Caco-2 (cell line): ENCODE measurements at regions of chr4 and their contacts with region 1.

Region 1: DNA sequence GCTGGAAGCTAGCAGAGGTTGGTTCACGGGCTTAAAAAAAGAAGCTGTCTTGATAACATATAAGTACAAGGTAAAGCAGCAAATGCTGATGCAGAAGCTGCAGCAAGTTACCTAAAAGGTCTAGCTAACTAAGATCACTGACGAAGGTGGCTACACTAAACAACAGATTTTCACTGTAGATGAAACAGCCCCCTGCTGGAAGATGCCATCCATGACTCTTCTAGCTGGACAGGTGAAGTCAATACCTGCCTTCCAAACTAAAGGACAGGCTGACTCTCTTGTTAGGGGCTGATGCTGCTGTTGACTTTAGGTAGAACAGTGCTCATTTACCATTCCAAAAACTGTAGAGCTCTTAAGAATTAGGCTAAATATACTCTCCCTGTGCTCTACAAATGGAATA is 99.5 kb downstream of the FBXW7 start:
- DNase-seq: peak; percentile 37 to 43
- H3K4me3 ChIP-seq: no peak overlapping the region
- H3K4me3 Mint-ChIP-seq: no peak overlapping the region
- H3K27ac Mint-ChIP-seq: no peak overlapping the region
- H3K4me1 ChIP-seq: peaks cover 13% of the 10 kb centered on the region
- H3K4me1 Mint-ChIP-seq: peaks cover 8% of the 10 kb centered on the region
- H3K27me3 ChIP-seq: no peaks in the 10 kb centered on the region
- H3K27me3 Mint-ChIP-seq: no peaks in the 10 kb centered on the region
- CTCF ChIP-seq: peak; percentile 12 to 35

Region 2: GRCh38 chr4:152408514-152409327 is 27.7 kb before region 1 on chr4:
- CTCF ChIA-PET with region 1: interaction called, 4 read pairs
- POLR2A ChIA-PET with region 1: no interaction called
- intact Hi-C with region 1: loop called (anchors 1 kb)
- DNase-seq: peak in 1 of 2 experiments; percentile 56
- H3K4me3 ChIP-seq: no peak overlapping the region
- H3K4me3 Mint-ChIP-seq: no peak overlapping the region
- H3K27ac Mint-ChIP-seq: no peak overlapping the region
- H3K4me1 ChIP-seq: 0 out of 2 replicates have a peak, but pooled peaks cover 1% of the 10 kb centered on the region
- H3K4me1 Mint-ChIP-seq: no peaks in the 10 kb centered on the region
- H3K27me3 ChIP-seq: no peaks in the 10 kb centered on the region
- H3K27me3 Mint-ChIP-seq: no peaks in the 10 kb centered on the region
- CTCF ChIP-seq: peak; percentile 54 to 55

Region 3: GRCh38 chr4:152480901-152481300 is 44.5 kb after region 1 on chr4:
- CTCF ChIA-PET with region 1: no interaction called
- POLR2A ChIA-PET with region 1: no interaction called
- intact Hi-C with region 1: loop called (anchors 1 kb)
- DNase-seq: no peak
- H3K4me3 ChIP-seq: no peak overlapping the region
- H3K4me3 Mint-ChIP-seq: no peak overlapping the region
- H3K27ac Mint-ChIP-seq: no peak overlapping the region
- H3K4me1 ChIP-seq: peaks cover 5% of the 10 kb centered on the region
- H3K4me1 Mint-ChIP-seq: peaks cover 6% of the 10 kb centered on the region
- H3K27me3 ChIP-seq: no peaks in the 10 kb centered on the region
- H3K27me3 Mint-ChIP-seq: no peaks in the 10 kb centered on the region
- CTCF ChIP-seq: no peak